PC-3 (cell line): ENCODE measurements at regions of chr15 and their contacts with region 1.

Region 1: GRCh38 chr15:66452971-66453580 is 44.5 kb downstream of the SNAPC5 start:
- DNase-seq: no peak
- ATAC-seq: no peak
- H3K4me3 ChIP-seq: no peak overlapping the region
- H3K27ac ChIP-seq: no peak overlapping the region
- H3K4me1 ChIP-seq: peaks cover 15% of the 10 kb centered on the region
- H3K27me3 ChIP-seq: no peaks in the 10 kb centered on the region
- CTCF ChIP-seq: no peak

Region 2: DNA sequence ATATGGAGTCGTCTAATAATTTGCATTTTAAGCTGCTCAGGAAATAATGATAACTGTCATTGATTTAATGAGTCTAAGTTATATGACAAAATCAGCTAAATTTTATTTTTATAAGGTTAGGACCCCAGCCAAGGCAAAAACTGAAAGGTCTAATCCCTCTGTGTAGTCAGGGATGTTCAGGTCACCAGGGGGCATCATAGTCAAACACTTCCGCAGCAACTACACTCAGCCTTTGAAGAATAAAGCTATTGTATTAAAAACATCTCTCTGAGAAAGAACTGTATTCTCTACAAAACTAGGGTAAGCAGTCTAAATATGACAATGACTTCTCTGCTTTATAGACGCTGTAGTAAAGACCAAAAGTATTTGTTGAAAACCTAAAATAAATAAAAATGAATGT is 857.1 kb before region 1 on chr15:
- CTCF ChIA-PET with region 1: no interaction called
- POLR2A ChIA-PET with region 1: interaction called, 12 read pairs
- intact Hi-C with region 1: no loop called
- DNase-seq: peak; percentile 15
- ATAC-seq: peak; percentile 40; the same call in 1 of the 2 replicates
- H3K4me3 ChIP-seq: no peak overlapping the region
- H3K27ac ChIP-seq: no peak overlapping the region
- H3K4me1 ChIP-seq: no peaks in the 10 kb centered on the region
- H3K27me3 ChIP-seq: no peaks in the 10 kb centered on the region
- CTCF ChIP-seq: peak; percentile 58

Region 3: DNA sequence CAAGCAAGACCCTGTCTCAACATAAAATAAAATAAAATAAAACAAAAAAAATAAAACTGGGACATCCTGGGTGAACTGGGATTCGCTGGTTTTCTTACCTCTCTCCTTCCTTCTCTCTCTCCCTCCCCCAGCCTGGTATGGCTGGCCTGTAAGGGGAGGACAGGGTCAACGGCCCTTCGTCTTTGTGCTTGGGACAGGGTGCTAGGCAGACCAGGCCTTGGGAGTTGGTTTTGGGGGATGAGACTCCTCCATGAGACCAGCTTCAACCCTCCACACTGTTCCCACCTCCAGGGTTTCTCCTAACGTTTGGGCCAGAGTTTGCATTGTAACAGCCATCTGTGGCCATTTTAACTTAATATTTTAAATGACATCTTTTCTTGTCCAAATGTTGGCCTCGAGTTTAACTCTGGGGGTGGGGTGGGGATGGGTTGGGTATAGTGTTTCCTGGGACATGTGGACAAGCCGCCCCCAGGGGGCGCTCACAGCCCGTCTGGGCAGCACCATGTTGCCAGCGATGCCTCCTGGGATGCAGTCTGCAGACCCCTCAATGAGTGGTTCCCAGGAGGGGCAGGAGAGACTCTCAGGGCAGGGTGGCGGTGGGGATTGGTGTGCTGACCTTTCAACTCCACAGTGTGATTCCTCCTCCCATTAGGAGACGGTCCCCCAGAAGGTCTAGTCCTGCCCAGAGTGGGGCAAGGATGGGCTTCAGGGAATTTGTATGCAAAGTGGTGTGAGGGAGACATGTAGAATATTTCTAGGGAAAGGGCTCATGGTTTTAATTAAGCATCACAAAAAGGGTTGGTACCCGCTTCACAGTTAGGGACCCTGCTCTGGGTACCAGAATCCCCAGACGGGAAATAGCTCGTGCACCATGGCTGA is 150.5 kb after region 1 on chr15:
- CTCF ChIA-PET with region 1: no interaction called
- POLR2A ChIA-PET with region 1: no interaction called
- intact Hi-C with region 1: no loop called
- DNase-seq: peak; percentile 63
- ATAC-seq: peak; percentile 80
- H3K4me3 ChIP-seq: no peak overlapping the region
- H3K27ac ChIP-seq: no peak overlapping the region
- H3K4me1 ChIP-seq: no peaks in the 10 kb centered on the region
- H3K27me3 ChIP-seq: no peaks in the 10 kb centered on the region
- CTCF ChIP-seq: peak; percentile 74